Activated CD8-positive, alpha-beta T cell treated with anti-CD3 and anti-CD28 coated beads, Interleukin-2, amount 10 ng/mL, durations not matched to agents 7 days and 5 days (primary cell): ENCODE measurements at regions of chr5 and their contacts with region 1.

Region 1: GRCh38 chr5:111742177-111742994 is 14.6 kb downstream of the NREP start:
- DNase-seq: no peak
- ATAC-seq: no peak
- H3K4me3 Mint-ChIP-seq: peak overlapping the region; percentile 53
- H3K27ac Mint-ChIP-seq: peak overlapping the region; percentile 22
- H3K4me1 Mint-ChIP-seq: peaks cover 22% of the 10 kb centered on the region
- H3K27me3 Mint-ChIP-seq: peaks cover 3% of the 10 kb centered on the region

Region 2: DNA sequence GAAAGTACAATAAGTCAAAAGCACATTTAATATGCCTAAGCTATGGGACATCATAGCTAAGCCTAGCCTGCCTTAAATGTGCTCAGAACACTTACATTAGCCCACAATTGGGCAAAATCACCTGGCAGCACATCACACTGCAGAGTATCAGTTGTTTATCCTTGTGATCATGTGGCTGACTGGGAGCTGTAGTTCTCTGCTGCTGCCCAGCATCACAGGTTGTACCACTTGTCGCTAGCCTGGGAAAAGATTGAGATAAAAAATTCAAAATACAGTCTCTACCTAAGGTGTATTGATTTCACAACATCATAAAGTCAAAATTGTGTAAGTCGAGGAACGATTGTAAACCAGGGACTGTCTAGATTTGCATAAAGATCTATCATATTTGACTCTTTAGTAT is 459.6 kb before region 1 on chr5:
- CTCF ChIA-PET with region 1: no interaction called
- POLR2A ChIA-PET with region 1: no interaction called
- DNase-seq: no peak
- ATAC-seq: no peak
- H3K4me3 Mint-ChIP-seq: no peak overlapping the region
- H3K27ac Mint-ChIP-seq: no peak overlapping the region
- H3K4me1 Mint-ChIP-seq: peaks cover 19% of the 10 kb centered on the region
- H3K27me3 Mint-ChIP-seq: no peaks in the 10 kb centered on the region

Region 3: GRCh38 chr5:111757355-111758283 is 15.2 kb after region 1 on chr5:
- CTCF ChIA-PET with region 1: interaction called, 11 read pairs
- POLR2A ChIA-PET with region 1: interaction called, 18 read pairs
- DNase-seq: peak; percentile 91
- ATAC-seq: peak; percentile 91
- H3K4me3 Mint-ChIP-seq: peak overlapping the region; percentile 84
- H3K27ac Mint-ChIP-seq: peak overlapping the region; percentile 89
- H3K4me1 Mint-ChIP-seq: peaks cover 26% of the 10 kb centered on the region
- H3K27me3 Mint-ChIP-seq: peaks cover 5% of the 10 kb centered on the region